Esophagus muscularis mucosa (tissue), 4 donors: ENCODE measurements at regions of chr2 and their contacts with region 1.

Region 1: DNA sequence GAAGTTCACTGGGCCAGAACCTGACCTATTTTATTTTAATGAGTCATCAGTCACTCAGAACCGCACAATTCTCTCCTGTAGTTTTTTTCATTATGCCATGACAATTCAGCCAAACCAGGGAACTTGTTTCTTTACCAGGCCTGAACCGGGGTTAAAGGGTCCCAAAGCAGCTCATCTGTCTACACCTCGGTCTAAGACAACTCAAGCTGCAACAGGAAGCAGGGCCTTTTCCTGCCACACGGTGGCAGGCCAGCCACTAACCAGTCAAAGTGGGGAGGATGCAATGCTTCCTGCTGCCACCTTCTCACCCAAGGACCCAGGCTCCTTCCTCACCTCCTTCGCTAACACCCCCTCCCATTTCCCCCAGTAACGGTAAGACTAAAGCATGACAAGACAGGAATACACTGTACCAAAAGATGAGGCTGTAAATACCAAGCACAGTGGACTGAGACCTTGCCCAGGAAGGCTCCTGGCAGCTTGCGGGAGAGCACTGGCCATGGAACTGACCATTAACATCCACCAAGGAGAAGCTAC is 56.7 kb upstream of the ACKR3 start:
- DNase-seq: no peak
- H3K4me3 ChIP-seq: no peak overlapping the region
- H3K27ac ChIP-seq: no peak overlapping the region
- H3K4me1 ChIP-seq: peaks cover 0 to 5% (median 1%) of the 10 kb centered on the region in 4 donors
- H3K27me3 ChIP-seq: peaks cover 0 to 1% (median under 1%) of the 10 kb centered on the region in 4 donors
- CTCF ChIP-seq: peak; percentile 79 to 92 (median 84)
- EP300 ChIP-seq: no peak
- POLR2A ChIP-seq: no peak

Region 2: GRCh38 chr2:236343400-236344161 is 169.4 kb before region 1 on chr2:
- intact Hi-C with region 1: no loop called
- DNase-seq: no peak
- H3K4me3 ChIP-seq: no peak overlapping the region
- H3K27ac ChIP-seq: no peak overlapping the region
- H3K4me1 ChIP-seq: peaks cover 0 to 7% (median 5%) of the 10 kb centered on the region in 4 donors
- H3K27me3 ChIP-seq: no peaks in the 10 kb centered on the region
- CTCF ChIP-seq: peak; percentile 70 to 86 (median 75)
- EP300 ChIP-seq: no peak
- POLR2A ChIP-seq: no peak

Region 3: DNA sequence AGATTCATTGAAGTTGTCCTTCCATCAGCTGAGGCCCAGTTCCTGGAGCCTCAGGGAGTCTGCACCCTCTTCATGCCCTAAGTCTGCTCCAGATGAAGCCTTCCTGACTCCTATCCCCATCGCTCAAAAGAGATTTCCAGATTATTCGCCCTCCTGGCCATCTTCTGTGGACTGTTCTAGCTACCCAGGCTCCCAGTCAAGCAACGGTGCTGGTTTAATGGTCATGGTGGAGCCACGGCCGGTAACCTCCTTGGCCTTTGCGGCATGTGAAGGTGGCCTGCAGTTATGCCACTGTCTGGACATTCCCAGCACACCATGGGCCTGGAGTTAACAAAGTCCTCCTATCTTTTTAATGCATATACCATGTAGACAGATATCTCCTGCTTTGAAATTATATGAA is 108.6 kb before region 1 on chr2:
- intact Hi-C with region 1: no loop called
- DNase-seq: no peak
- H3K4me3 ChIP-seq: no peak overlapping the region
- H3K27ac ChIP-seq: no peak overlapping the region
- H3K4me1 ChIP-seq: no peaks in the 10 kb centered on the region
- H3K27me3 ChIP-seq: no peaks in the 10 kb centered on the region
- CTCF ChIP-seq: no peak
- EP300 ChIP-seq: no peak
- POLR2A ChIP-seq: no peak

Region 4: DNA sequence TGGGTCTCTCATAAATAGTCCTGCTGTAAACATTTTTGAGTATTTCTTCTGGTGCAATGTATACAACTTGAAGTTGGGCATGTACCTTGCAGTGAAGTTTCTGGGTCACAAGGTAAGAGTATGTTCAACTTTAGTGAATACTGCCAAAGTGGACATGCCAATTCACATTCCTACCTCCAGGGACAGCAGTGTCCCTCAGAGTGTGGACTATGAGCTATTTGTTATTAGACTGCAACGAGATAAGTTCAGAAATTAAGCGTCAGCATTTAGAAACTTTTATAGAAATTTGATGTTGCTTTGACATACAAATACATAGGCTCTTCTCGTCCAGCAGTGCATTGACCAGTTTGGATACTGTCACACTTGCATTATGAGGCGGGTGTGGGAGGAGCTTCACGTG is 49.5 kb after region 1 on chr2:
- intact Hi-C with region 1: loop called (anchors 5 kb)
- DNase-seq: no peak
- H3K4me3 ChIP-seq: no peak overlapping the region
- H3K27ac ChIP-seq: no peak overlapping the region
- H3K4me1 ChIP-seq: peaks cover 11 to 16% (median 13%) of the 10 kb centered on the region in 4 donors
- H3K27me3 ChIP-seq: peaks cover 0 to 4% (median 0%) of the 10 kb centered on the region in 4 donors
- CTCF ChIP-seq: peak; percentile 56 to 68 (median 58)
- EP300 ChIP-seq: no peak
- POLR2A ChIP-seq: no peak

Region 5: GRCh38 chr2:237026981-237027711 is 514.2 kb after region 1 on chr2:
- intact Hi-C with region 1: loop called (anchors 2 kb)
- DNase-seq: no peak
- H3K4me3 ChIP-seq: no peak overlapping the region
- H3K27ac ChIP-seq: no peak overlapping the region
- H3K4me1 ChIP-seq: peaks cover 0 to 7% (median 3%) of the 10 kb centered on the region in 4 donors
- H3K27me3 ChIP-seq: no peaks in the 10 kb centered on the region
- CTCF ChIP-seq: peak; percentile 64 to 77 (median 74)
- EP300 ChIP-seq: no peak
- POLR2A ChIP-seq: no peak

Region 6: DNA sequence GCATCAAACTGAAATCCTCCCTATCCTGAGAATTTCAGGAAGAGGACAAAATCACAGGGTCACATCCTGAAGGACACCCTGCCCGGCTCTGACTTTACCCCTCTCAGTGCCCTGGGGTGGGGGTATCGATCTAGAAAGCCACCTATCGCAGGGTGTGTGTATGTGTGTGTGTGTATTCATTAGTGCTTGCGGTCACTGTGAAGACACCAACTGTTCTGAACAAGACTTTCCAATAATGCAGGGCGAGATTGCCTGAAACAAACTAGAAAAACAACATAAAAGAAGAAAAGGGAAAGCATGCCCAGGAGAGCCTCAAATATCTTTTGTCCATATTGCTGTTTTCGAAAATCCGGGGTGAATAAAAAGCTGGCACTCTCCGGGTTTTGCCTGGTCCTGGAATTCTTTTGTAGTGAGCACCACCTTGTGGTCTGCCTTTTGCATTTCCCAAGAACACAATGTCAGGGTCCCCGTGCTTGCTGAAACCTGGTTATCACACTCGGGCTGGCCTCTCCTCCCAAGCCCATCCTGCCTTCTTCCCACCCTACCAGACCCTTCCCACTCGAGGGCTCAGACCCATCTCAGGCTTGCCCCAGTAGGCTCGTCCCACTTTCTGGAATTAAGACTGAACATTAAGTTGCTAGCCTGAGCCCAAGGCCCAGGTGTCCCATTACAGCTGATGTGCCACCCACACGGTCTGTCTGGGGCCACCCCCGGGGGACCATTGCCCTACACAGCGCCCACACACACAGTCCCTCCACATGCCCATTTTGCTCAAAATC is 547.8 kb after region 1 on chr2:
- intact Hi-C with region 1: loop called (anchors 5 kb)
- DNase-seq: no peak
- H3K4me3 ChIP-seq: no peak overlapping the region
- H3K27ac ChIP-seq: no peak overlapping the region
- H3K4me1 ChIP-seq: peaks cover 0 to 11% (median 9%) of the 10 kb centered on the region in 4 donors
- H3K27me3 ChIP-seq: no peaks in the 10 kb centered on the region
- CTCF ChIP-seq: peak; percentile 49 to 71 (median 69)
- EP300 ChIP-seq: no peak
- POLR2A ChIP-seq: no peak